GM12878 (cell line): ENCODE measurements at regions of chr22 and their contacts with region 1.

Region 1: DNA sequence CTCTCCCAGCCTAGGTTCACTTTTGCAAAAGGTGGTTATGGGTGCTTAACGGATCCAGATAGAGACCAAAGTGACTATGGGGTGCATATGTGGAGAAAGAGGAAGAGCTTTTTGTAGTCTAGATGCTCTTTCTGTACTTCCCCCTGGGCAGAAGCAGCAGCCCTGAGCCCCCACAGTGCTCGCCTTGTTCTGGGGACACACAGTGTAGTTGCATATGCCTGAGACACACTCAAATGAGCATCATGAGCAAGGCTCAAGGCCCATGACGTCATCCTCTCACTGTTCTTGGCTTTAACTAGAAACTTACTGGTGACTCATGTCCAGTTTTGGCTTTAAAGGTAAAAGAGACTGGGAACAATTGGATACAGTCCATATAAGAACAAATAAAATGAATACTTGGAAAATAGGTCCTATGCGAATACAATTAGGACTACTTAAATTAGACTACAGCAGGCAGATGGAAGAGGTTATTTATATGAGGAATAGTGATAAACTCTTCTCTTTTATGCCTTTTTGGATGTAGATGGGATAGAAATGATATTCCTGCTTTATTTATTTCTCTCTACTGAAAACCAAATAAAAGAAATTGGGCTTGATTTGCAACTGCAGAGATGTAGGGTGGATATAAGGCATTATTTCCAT is 20.1 kb upstream of the PEX26 start:
- DNase-seq: peak; percentile 68
- ATAC-seq: peak; percentile 84
- H3K4me3 ChIP-seq: peak overlapping the region; percentile 48; the same call in 1 of the 2 replicates
- H3K27ac ChIP-seq: peak overlapping the region; percentile 49; the same call in 1 of the 2 replicates
- H3K4me1 ChIP-seq: peaks cover 30% of the 10 kb centered on the region
- H3K27me3 ChIP-seq: no peaks in the 10 kb centered on the region
- CTCF ChIP-seq: no peak
- EP300 ChIP-seq: peak; percentile 29 to 49; a peak in 2 of 4 replicates
- POLR2A ChIP-seq: no peak
- RAD21 ChIP-seq: no peak

Region 2: DNA sequence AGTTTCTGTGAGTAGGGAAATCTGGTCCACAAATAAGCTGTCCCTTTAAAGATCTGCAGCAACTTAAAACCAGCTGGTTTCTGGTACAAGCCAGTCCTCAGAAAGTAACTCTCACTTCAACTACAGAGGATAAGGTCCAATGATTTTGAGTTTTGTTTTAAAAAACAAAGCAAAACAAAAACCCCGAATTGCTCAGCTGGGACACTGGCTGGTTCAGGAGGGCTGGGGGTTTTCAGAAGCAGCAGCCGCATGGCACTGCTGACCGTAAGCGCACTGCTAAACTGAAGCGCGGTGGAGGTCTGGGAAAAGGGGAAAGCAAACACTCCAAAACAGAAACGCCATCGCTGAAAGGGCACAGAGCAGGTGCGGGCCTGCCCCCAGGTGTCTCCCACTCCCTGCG is 93.0 kb before region 1 on chr22:
- CTCF ChIA-PET with region 1: interaction called, 3 read pairs
- POLR2A ChIA-PET with region 1: interaction called, 5 read pairs
- RAD21 ChIA-PET with region 1: interaction called, 6 read pairs
- SMC1A ChIA-PET with region 1: interaction called, 10 read pairs
- in situ Hi-C with region 1: no loop called
- intact Hi-C with region 1: no loop called
- DNase-seq: peak; percentile 65
- ATAC-seq: peak; percentile 95
- H3K4me3 ChIP-seq: peak overlapping the region; percentile 41; the same call in 1 of the 2 replicates
- H3K27ac ChIP-seq: peak overlapping the region; percentile 67
- H3K4me1 ChIP-seq: peaks cover 28% of the 10 kb centered on the region
- H3K27me3 ChIP-seq: no peaks in the 10 kb centered on the region
- CTCF ChIP-seq: peak in 1 of 3 experiments; percentile 8; a peak in 1 of 6 replicates
- EP300 ChIP-seq: peak in 1 of 2 experiments; percentile 34; a peak in 1 of 4 replicates
- POLR2A ChIP-seq: peak; percentile 50; the same call in 1 of the 2 replicates
- RAD21 ChIP-seq: peak; percentile 34

Region 3: DNA sequence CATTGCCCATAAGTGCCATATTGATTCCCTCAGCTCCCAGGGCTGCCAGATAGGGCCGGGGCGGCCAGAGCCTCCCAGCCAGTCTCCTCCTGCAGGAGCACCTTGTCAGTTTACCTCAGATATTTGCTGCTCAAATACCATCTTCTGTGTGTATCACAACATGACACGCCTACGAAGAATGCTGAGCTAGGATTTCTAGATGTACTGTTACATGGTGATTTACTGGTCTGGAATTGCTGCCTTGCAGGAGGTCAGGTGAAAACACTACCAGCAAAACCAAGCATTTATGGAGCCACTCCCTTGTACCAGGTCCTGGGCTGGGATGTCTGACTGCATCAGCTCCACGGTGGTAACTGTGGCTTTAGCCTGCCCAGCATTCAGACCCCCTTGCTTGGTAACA is 45.2 kb before region 1 on chr22:
- CTCF ChIA-PET with region 1: interaction called, 3 read pairs
- POLR2A ChIA-PET with region 1: interaction called, 7 read pairs
- RAD21 ChIA-PET with region 1: interaction called, 12 read pairs
- SMC1A ChIA-PET with region 1: interaction called, 5 read pairs
- in situ Hi-C with region 1: no loop called
- intact Hi-C with region 1: no loop called
- DNase-seq: no peak
- ATAC-seq: no peak
- H3K4me3 ChIP-seq: no peak overlapping the region
- H3K27ac ChIP-seq: no peak overlapping the region
- H3K4me1 ChIP-seq: peaks cover 11% of the 10 kb centered on the region
- H3K27me3 ChIP-seq: no peaks in the 10 kb centered on the region
- CTCF ChIP-seq: no peak
- EP300 ChIP-seq: no peak
- POLR2A ChIP-seq: no peak
- RAD21 ChIP-seq: no peak

Region 4: GRCh38 chr22:18044548-18045271 is 13.0 kb before region 1 on chr22:
- CTCF ChIA-PET with region 1: no interaction called
- POLR2A ChIA-PET with region 1: interaction called, 4 read pairs
- RAD21 ChIA-PET with region 1: interaction called, 4 read pairs
- SMC1A ChIA-PET with region 1: interaction called, 11 read pairs
- in situ Hi-C with region 1: no loop called
- intact Hi-C with region 1: no loop called
- DNase-seq: no peak
- ATAC-seq: no peak; the same call in 2 of the 3 replicates
- H3K4me3 ChIP-seq: no peak overlapping the region
- H3K27ac ChIP-seq: no peak overlapping the region
- H3K4me1 ChIP-seq: no peaks in the 10 kb centered on the region; the same call in 1 of the 2 replicates
- H3K27me3 ChIP-seq: no peaks in the 10 kb centered on the region
- CTCF ChIP-seq: no peak
- EP300 ChIP-seq: no peak
- POLR2A ChIP-seq: no peak
- RAD21 ChIP-seq: no peak

Region 5: DNA sequence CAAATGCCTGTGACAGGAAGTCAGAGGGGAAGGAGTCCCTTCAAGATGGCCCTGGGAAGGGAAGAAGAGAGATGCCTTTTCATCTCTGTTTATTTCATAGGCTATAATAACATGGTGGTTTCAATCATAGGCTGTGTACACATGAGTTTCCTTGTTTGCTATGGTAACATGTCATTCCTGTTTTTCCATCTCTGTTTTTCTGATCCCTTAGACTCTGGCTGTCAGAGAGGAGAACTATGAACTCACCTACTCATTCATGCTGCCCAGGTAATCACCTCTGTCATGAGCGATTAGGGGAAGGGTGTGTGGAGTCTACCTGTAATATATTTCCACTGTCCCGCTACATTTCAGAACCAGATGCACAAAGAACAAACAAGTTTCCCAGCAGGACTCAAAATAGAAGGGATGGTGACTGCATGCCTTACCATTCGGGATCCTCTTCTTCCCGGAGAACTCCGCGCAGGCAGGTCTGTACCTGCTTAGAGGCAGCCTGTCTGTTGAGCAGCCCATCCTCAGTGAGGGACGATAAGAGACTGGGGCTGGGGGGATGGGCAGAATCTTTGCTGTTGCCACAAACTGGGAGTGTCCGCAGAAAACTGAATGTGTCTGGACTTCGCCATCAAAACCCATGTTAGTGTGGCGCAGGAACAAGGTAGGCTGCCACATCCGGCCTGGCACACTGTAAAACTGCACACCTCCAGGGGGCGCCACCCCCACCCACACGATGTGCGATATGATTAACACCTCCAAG is 13.0 kb after region 1 on chr22:
- CTCF ChIA-PET with region 1: interaction called, 75 read pairs
- POLR2A ChIA-PET with region 1: interaction called, 27 read pairs
- RAD21 ChIA-PET with region 1: interaction called, 78 read pairs
- SMC1A ChIA-PET with region 1: interaction called, 86 read pairs
- in situ Hi-C with region 1: no loop called
- intact Hi-C with region 1: no loop called
- DNase-seq: no peak
- ATAC-seq: no peak
- H3K4me3 ChIP-seq: no peak overlapping the region
- H3K27ac ChIP-seq: no peak overlapping the region
- H3K4me1 ChIP-seq: peaks cover 26% of the 10 kb centered on the region
- H3K27me3 ChIP-seq: no peaks in the 10 kb centered on the region
- CTCF ChIP-seq: peak in 2 of 3 experiments; percentile 43 to 49; a peak in 4 of 6 replicates
- EP300 ChIP-seq: no peak
- POLR2A ChIP-seq: no peak
- RAD21 ChIP-seq: no peak